Activated naive CD4-positive, alpha-beta T cell treated with anti-CD3 and anti-CD28 coated beads for 36 hours (primary cell): ENCODE measurements at regions of chr4 and their contacts with region 1.

Region 1: GRCh38 chr4:183659029-183659871 is at the starts of genes RWDD4 and TRAPPC11:
- DNase-seq: peak; percentile 98
- H3K4me3 Mint-ChIP-seq: peak within 1 kb of the TSS; percentile 96
- H3K27ac Mint-ChIP-seq: peak within 1 kb of the TSS; percentile 68
- H3K4me1 Mint-ChIP-seq: peaks cover 32% of the 10 kb centered on the region
- H3K27me3 Mint-ChIP-seq: no peaks in the 10 kb centered on the region
- total RNA-seq, gene RWDD4: 17.8 to 20.8 TPM
- total RNA-seq, gene TRAPPC11: 25.0 to 32.6 TPM

Region 2: GRCh38 chr4:182917182-182918043 is 741.8 kb before region 1 on chr4 and contains the start of gene DCTD:
- CTCF ChIA-PET with region 1: no interaction called
- intact Hi-C with region 1: loop called (anchors 1 kb)
- DNase-seq: peak; percentile 83
- H3K4me3 Mint-ChIP-seq: peak within 1 kb of the TSS; percentile 86
- H3K27ac Mint-ChIP-seq: peak within 1 kb of the TSS; percentile 92
- H3K4me1 Mint-ChIP-seq: peaks cover 53% of the 10 kb centered on the region
- H3K27me3 Mint-ChIP-seq: no peaks in the 10 kb centered on the region
- total RNA-seq, gene DCTD: 137 to 152 TPM

Region 3: GRCh38 chr4:183407128-183407585 is 252.1 kb before region 1 on chr4:
- CTCF ChIA-PET with region 1: no interaction called
- intact Hi-C with region 1: loop called (anchors 1 kb)
- DNase-seq: peak; percentile 94
- H3K4me3 Mint-ChIP-seq: peak overlapping the region; percentile 76
- H3K27ac Mint-ChIP-seq: peak overlapping the region; percentile 79
- H3K4me1 Mint-ChIP-seq: peaks cover 6% of the 10 kb centered on the region
- H3K27me3 Mint-ChIP-seq: no peaks in the 10 kb centered on the region

Region 4: GRCh38 chr4:183621875-183622274 is 37.4 kb before region 1 on chr4:
- CTCF ChIA-PET with region 1: no interaction called
- intact Hi-C with region 1: no loop called
- DNase-seq: no peak
- H3K4me3 Mint-ChIP-seq: no peak overlapping the region
- H3K27ac Mint-ChIP-seq: no peak overlapping the region
- H3K4me1 Mint-ChIP-seq: no peaks in the 10 kb centered on the region
- H3K27me3 Mint-ChIP-seq: peaks cover 2% of the 10 kb centered on the region

Region 5: DNA sequence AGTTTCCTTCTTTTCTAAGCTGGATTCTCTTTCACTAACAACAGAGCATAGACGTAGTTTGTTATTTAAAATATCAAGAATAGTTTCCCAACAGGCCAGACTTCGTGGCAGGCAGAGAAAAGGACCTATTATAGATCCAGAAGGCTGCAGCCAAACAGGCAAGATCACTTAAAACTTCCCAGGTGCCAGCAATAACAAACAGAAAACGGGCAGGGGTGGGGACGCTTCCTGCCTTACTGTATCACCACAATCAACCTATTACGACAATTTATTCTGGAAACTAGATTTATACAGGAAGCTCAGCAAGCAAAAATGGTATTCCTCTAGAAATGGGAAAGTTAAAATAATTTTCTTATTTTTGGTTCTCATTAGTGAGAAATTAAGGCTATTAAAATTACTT is 22.3 kb before region 1 on chr4:
- CTCF ChIA-PET with region 1: no interaction called
- intact Hi-C with region 1: loop called (anchors 1 kb)
- DNase-seq: no peak
- H3K4me3 Mint-ChIP-seq: no peak overlapping the region
- H3K27ac Mint-ChIP-seq: no peak overlapping the region
- H3K4me1 Mint-ChIP-seq: peaks cover 24% of the 10 kb centered on the region
- H3K27me3 Mint-ChIP-seq: peaks cover 2% of the 10 kb centered on the region

Region 6: DNA sequence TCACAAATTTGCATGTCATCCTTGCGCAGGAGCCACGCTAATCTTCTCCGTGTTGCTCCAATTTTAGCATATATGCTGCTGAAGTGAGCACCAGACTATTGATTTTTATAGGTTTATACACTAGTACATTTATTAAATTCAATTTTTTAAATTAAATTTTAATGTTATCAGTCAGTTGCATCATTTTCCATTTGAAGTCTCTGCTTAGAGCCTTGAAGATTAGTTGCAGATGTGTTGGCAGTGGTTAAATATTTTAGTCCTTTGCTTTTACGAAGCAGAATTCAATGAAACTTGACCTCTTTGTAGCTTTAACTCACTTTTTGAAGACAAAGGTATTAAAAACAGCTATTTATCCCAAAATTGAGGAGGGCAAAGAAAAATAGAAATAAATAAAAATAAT is 16.4 kb after region 1 on chr4:
- CTCF ChIA-PET with region 1: no interaction called
- intact Hi-C with region 1: no loop called
- DNase-seq: no peak
- H3K4me3 Mint-ChIP-seq: no peak overlapping the region
- H3K27ac Mint-ChIP-seq: no peak overlapping the region
- H3K4me1 Mint-ChIP-seq: peaks cover 2% of the 10 kb centered on the region
- H3K27me3 Mint-ChIP-seq: no peaks in the 10 kb centered on the region